Left ventricle myocardium inferior (tissue), 1 donor: ENCODE measurements at regions of chr7 and their contacts with region 1.

Region 1: DNA sequence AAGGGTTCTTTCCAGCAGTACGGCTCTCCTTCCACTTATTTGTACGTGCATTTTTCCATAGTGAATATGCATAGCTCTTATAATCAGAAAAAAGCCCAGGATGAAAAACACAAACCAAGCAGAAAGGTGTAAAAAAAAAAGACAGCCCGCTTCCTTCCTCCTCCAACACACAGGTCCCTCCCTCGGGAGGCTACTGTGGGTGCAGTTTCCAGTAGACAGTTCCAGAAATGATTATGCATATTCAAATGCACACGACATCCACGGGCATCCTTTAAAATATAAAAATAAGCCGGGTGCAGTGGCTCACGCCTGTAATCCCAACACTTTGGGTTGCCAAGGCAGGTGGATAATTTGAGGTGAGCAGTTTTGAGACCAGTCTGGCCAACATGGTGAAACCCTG is 59.9 kb downstream of the TNRC18 start:
- DNase-seq: no peak
- H3K4me3 ChIP-seq: no peak overlapping the region
- H3K27ac ChIP-seq: no peak overlapping the region
- H3K4me1 ChIP-seq: peaks cover 27% of the 10 kb centered on the region
- H3K27me3 ChIP-seq: no peaks in the 10 kb centered on the region
- CTCF ChIP-seq: no peak

Region 2: GRCh38 chr7:5450549-5451372 is 87.0 kb after region 1 on chr7:
- intact Hi-C with region 1: loop called (anchors 10 kb)
- DNase-seq: peak; percentile 51
- H3K4me3 ChIP-seq: no peak overlapping the region
- H3K27ac ChIP-seq: no peak overlapping the region
- H3K4me1 ChIP-seq: peaks cover 4% of the 10 kb centered on the region
- H3K27me3 ChIP-seq: no peaks in the 10 kb centered on the region
- CTCF ChIP-seq: peak; percentile 81